ENCODE measurements at regions of chr6 and their contacts with region 1.

Region 1: DNA sequence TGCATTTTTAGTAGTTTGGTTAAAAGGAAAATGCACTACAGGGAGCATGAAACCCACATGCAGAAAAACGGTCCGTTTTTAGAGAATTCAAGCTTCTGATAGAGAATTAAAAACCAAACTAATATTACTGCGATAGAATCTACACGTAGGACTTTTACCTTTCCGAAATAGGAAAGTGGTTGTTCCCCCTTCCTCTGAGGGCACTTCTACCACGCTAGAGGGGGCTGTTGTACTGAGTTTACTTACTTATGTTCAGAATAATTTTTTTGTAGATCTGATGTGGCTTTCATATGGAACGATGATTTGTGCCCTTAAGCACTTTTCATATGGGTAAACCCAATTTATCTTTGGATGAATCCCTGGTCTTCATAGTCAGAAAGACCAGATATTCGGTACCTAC is 264.3 kb upstream of the PLN start:
- DNase-seq: peak in 13 of 14 experiments; percentile 9 to 74 (median 38)
- ATAC-seq: peak; percentile 59
- H3K4me3 ChIP-seq: no peak overlapping the region
- H3K4me3 Mint-ChIP-seq: no peak overlapping the region
- H3K27ac ChIP-seq: no peak overlapping the region
- H3K27ac Mint-ChIP-seq: no peak overlapping the region
- H3K4me1 ChIP-seq: no peaks in the 10 kb centered on the region
- H3K4me1 Mint-ChIP-seq: no peaks in the 10 kb centered on the region
- H3K27me3 ChIP-seq: no peaks in the 10 kb centered on the region
- H3K27me3 Mint-ChIP-seq: peaks cover 11% of the 10 kb centered on the region
- CTCF ChIP-seq: peak; percentile 67

Region 2: GRCh38 chr6:118551063-118552053 is 267.6 kb after region 1 on chr6:
- CTCF ChIA-PET with region 1: no interaction called
- POLR2A ChIA-PET with region 1: no interaction called
- intact Hi-C with region 1: loop called (anchors 1 to 2 kb)
- DNase-seq: peak in 4 of 14 experiments; percentile 42 to 70 (median 61)
- ATAC-seq: peak; percentile 96
- H3K4me3 ChIP-seq: no peak overlapping the region
- H3K4me3 Mint-ChIP-seq: no peak overlapping the region
- H3K27ac ChIP-seq: no peak overlapping the region
- H3K27ac Mint-ChIP-seq: peak overlapping the region; percentile 13
- H3K4me1 ChIP-seq: no peaks in the 10 kb centered on the region
- H3K4me1 Mint-ChIP-seq: peaks cover 56% of the 10 kb centered on the region
- H3K27me3 ChIP-seq: no peaks in the 10 kb centered on the region
- H3K27me3 Mint-ChIP-seq: no peaks in the 10 kb centered on the region
- CTCF ChIP-seq: peak; percentile 63

Region 3: DNA sequence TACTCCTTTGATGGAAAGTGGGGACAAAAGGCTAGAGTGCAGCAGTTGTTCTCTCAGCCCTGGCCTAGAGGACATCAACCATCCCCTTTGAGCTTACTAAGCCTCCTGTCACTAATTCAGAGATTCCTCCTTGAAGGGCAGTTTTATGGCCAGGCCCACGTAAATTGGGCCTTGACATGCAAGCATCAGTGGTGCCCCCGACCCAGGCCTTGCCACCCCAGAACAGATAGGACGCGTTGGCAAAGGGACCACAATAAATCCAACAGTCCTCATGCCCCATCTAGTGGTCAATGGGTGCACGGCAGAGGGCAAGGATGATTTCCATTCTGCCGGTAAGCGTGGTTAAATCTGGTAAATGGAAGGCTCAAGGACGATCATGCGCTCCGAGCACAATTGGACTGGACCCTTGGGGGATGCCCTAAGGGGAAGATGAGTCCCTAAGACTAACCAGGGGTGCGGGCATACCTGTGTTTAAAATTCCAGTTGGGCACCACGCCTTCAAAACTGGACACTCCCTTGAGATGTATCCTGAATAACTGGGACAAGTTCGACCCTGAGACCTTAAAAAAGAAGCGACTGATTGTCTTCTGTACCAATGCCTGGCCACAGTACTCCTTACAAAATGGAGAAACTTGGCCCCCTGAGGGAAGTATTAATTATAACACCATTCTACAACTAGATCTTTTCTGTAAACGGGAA is 335.1 kb after region 1 on chr6:
- CTCF ChIA-PET with region 1: no interaction called
- POLR2A ChIA-PET with region 1: no interaction called
- intact Hi-C with region 1: loop called in 1 of 2 experiments (anchors 5 kb)
- DNase-seq: peak; percentile 38 to 78 (median 64)
- ATAC-seq: peak; percentile 97
- H3K4me3 ChIP-seq: no peak overlapping the region
- H3K4me3 Mint-ChIP-seq: peak overlapping the region; percentile 9
- H3K27ac ChIP-seq: no peak overlapping the region
- H3K27ac Mint-ChIP-seq: peak overlapping the region; percentile 62
- H3K4me1 ChIP-seq: peaks cover 28% of the 10 kb centered on the region
- H3K4me1 Mint-ChIP-seq: peaks cover 86% of the 10 kb centered on the region
- H3K27me3 ChIP-seq: no peaks in the 10 kb centered on the region
- H3K27me3 Mint-ChIP-seq: no peaks in the 10 kb centered on the region
- CTCF ChIP-seq: peak; percentile 76

Region 4: DNA sequence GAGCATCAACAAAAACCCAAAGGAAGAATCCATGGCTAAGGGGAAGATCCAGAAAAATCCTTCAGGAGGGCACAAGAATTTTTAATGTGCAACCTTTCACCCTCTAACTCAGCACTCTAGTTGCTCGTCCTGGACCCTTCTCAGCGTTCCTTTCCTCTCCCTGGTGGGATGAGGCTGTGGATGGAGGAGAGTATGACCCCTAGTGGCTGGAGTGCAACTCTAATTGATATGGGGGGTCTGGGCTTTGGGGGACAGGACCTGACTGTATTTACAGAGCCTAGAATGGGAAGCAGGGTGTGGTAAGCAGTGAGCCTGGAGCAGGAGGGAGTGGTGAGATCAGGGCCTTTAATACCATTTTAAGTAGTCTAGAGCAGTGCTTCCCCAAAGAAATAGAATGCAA is 451.6 kb after region 1 on chr6:
- CTCF ChIA-PET with region 1: no interaction called
- POLR2A ChIA-PET with region 1: no interaction called
- intact Hi-C with region 1: loop called in 1 of 2 experiments (anchors 5 kb)
- DNase-seq: peak in 4 of 14 experiments; percentile 31 to 48 (median 32)
- ATAC-seq: peak; percentile 34
- H3K4me3 ChIP-seq: no peak overlapping the region
- H3K4me3 Mint-ChIP-seq: no peak overlapping the region
- H3K27ac ChIP-seq: no peak overlapping the region
- H3K27ac Mint-ChIP-seq: no peak overlapping the region
- H3K4me1 ChIP-seq: peaks cover 7% of the 10 kb centered on the region
- H3K4me1 Mint-ChIP-seq: peaks cover 24% of the 10 kb centered on the region
- H3K27me3 ChIP-seq: no peaks in the 10 kb centered on the region
- H3K27me3 Mint-ChIP-seq: no peaks in the 10 kb centered on the region
- CTCF ChIP-seq: peak; percentile 48

Region 5: GRCh38 chr6:118963003-118963402 is 679.2 kb after region 1 on chr6:
- CTCF ChIA-PET with region 1: no interaction called
- POLR2A ChIA-PET with region 1: no interaction called
- intact Hi-C with region 1: loop called in 1 of 2 experiments (anchors 5 kb)
- DNase-seq: peak in 3 of 14 experiments; percentile 15 to 30 (median 20)
- ATAC-seq: no peak
- H3K4me3 ChIP-seq: no peak overlapping the region
- H3K4me3 Mint-ChIP-seq: no peak overlapping the region
- H3K27ac ChIP-seq: no peak overlapping the region
- H3K27ac Mint-ChIP-seq: no peak overlapping the region
- H3K4me1 ChIP-seq: no peaks in the 10 kb centered on the region
- H3K4me1 Mint-ChIP-seq: peaks cover 8% of the 10 kb centered on the region
- H3K27me3 ChIP-seq: no peaks in the 10 kb centered on the region
- H3K27me3 Mint-ChIP-seq: no peaks in the 10 kb centered on the region
- CTCF ChIP-seq: peak; percentile 55

Measured in CD4-positive, alpha-beta T cell (primary cell).